ENCODE measurements at regions of chr6 and their contacts with region 1.

Region 1: GRCh38 chr6:108874470-108875160 is 26.4 kb downstream of the ARMC2 start:
- DNase-seq: peak; percentile 51
- H3K4me3 Mint-ChIP-seq: peak overlapping the region; percentile 34
- H3K27ac Mint-ChIP-seq: peak overlapping the region; percentile 96
- H3K4me1 Mint-ChIP-seq: peaks cover 80% of the 10 kb centered on the region
- H3K27me3 Mint-ChIP-seq: peaks cover 4% of the 10 kb centered on the region

Region 2: GRCh38 chr6:108667993-108668392 is 206.6 kb before region 1 on chr6:
- intact Hi-C with region 1: no loop called
- DNase-seq: no peak
- H3K4me3 Mint-ChIP-seq: no peak overlapping the region
- H3K27ac Mint-ChIP-seq: no peak overlapping the region
- H3K4me1 Mint-ChIP-seq: peaks cover 9% of the 10 kb centered on the region
- H3K27me3 Mint-ChIP-seq: peaks cover 4% of the 10 kb centered on the region

Region 3: GRCh38 chr6:108841377-108841855 is 33.2 kb before region 1 on chr6:
- intact Hi-C with region 1: no loop called
- DNase-seq: no peak
- H3K4me3 Mint-ChIP-seq: no peak overlapping the region
- H3K27ac Mint-ChIP-seq: no peak overlapping the region
- H3K4me1 Mint-ChIP-seq: peaks cover 30% of the 10 kb centered on the region
- H3K27me3 Mint-ChIP-seq: peaks cover 33% of the 10 kb centered on the region

Region 4: DNA sequence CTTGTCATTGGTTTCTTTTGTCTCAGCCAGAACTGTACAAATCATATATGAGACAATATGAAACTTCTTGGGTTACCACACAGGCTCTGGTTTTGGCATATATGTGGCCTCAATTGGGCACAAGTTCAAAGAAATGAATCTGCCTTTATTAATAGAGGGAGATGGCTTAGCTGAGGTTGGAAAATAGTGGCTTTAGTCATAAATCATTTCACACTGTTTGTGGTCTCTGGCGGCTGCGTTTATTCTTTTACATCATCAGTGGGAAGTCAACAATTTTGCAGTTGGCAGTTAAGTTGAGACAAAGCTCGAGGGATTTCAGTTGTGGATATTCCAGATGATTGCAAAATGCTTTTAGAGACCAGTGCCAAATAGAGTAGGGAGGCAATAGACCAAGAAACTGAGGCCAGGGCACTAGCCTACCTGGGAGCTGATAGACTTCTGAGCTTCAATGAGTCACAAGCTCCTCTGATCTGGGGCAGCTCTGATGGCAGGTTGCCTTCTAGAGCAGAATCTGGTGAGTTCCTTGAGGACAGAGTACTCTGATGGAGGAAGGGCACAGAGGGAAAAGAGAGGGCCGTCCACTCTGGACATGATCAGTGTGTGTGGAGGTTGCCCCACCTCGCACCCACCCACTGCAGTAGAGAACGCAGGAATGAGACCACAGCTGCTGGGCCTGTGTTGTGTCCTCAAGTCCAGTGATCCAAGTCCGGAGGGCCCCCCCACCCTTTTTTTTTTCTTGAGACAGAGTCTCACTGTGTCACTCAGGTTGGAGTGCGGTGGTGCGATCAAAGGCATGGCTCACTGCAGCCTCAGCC is 47.1 kb after region 1 on chr6:
- intact Hi-C with region 1: loop called (anchors 1 kb)
- DNase-seq: no peak
- H3K4me3 Mint-ChIP-seq: peak overlapping the region; percentile 8
- H3K27ac Mint-ChIP-seq: peak overlapping the region; percentile 63
- H3K4me1 Mint-ChIP-seq: peaks cover 34% of the 10 kb centered on the region
- H3K27me3 Mint-ChIP-seq: peaks cover 22% of the 10 kb centered on the region

Region 5: DNA sequence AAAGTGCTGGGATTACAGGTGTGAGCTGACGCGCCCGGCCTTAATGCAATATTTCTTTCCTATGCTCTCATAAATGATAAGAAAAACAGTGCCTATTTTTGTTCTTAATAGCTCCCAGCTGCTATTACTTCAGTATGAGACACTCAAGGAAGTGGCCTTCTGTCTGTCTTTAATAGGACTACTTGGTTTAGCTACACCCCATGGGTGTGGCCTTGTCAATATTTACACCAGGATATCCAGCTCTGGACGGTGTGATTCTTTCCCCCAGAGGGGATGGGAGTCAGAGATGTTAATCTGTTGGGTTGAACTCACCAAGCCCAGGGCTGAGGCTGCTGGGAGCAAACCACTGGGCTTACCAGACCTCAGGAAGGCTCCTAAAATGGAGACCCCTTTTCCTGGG is 354.9 kb after region 1 on chr6:
- intact Hi-C with region 1: no loop called
- DNase-seq: no peak
- H3K4me3 Mint-ChIP-seq: no peak overlapping the region
- H3K27ac Mint-ChIP-seq: no peak overlapping the region
- H3K4me1 Mint-ChIP-seq: peaks cover 8% of the 10 kb centered on the region
- H3K27me3 Mint-ChIP-seq: no peaks in the 10 kb centered on the region